ENCODE measurements at regions of chr1 and their contacts with region 1.

Region 1: GRCh38 chr1:205300886-205301821 is 20.4 kb downstream of the NUAK2 start:
- DNase-seq: no peak
- H3K4me3 ChIP-seq: no peak overlapping the region
- H3K4me3 Mint-ChIP-seq: no peak overlapping the region
- H3K27ac ChIP-seq: no peak overlapping the region
- H3K27ac Mint-ChIP-seq: peak overlapping the region in 3 of 7 donors; percentile 9 to 35 (median 34)
- H3K4me1 ChIP-seq: peaks cover 29% of the 10 kb centered on the region
- H3K4me1 Mint-ChIP-seq: peaks cover 31 to 61% (median 44%) of the 10 kb centered on the region in 4 donors
- H3K27me3 ChIP-seq: no peaks in the 10 kb centered on the region
- H3K27me3 Mint-ChIP-seq: no peaks in the 10 kb centered on the region

Region 2: GRCh38 chr1:205313563-205314308 is 12.6 kb after region 1 on chr1:
- CTCF ChIA-PET with region 1: interaction called, 26 read pairs
- POLR2A ChIA-PET with region 1: interaction called, 67 read pairs
- intact Hi-C with region 1: loop called (anchors 2 kb)
- DNase-seq: peak in 2 of 5 donors; percentile 18 to 54
- H3K4me3 ChIP-seq: peak overlapping the region; percentile 17 to 20
- H3K4me3 Mint-ChIP-seq: peak overlapping the region; percentile 82 to 93 (median 86)
- H3K27ac ChIP-seq: peak overlapping the region; percentile 2
- H3K27ac Mint-ChIP-seq: peak overlapping the region; percentile 81 to 95 (median 88)
- H3K4me1 ChIP-seq: peaks cover 86% of the 10 kb centered on the region
- H3K4me1 Mint-ChIP-seq: peaks cover 66 to 95% (median 78%) of the 10 kb centered on the region in 4 donors
- H3K27me3 ChIP-seq: no peaks in the 10 kb centered on the region
- H3K27me3 Mint-ChIP-seq: no peaks in the 10 kb centered on the region

Region 3: DNA sequence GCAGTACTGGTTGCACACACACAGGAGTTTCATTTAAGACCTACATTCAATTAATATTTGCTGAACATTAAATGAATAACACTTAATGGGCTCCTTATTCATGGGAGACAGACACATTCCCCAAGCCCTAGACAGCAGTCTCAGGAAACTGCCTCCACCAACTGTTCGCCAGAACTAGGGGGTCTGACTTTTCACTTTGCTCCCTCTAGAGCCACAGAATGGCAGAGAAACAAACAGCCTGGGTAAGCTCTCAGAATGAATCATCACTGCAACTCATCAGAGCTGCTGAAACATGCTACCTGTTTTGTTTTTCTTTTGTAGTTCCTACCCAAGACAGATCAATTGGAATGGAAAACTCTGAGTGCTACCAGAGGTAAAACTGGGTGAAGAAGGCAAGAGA is 298.9 kb after region 1 on chr1:
- CTCF ChIA-PET with region 1: no interaction called
- POLR2A ChIA-PET with region 1: no interaction called
- intact Hi-C with region 1: no loop called
- DNase-seq: no peak
- H3K4me3 ChIP-seq: no peak overlapping the region
- H3K4me3 Mint-ChIP-seq: no peak overlapping the region
- H3K27ac ChIP-seq: no peak overlapping the region
- H3K27ac Mint-ChIP-seq: peak overlapping the region in 3 of 7 donors; percentile 37 to 80 (median 59)
- H3K4me1 ChIP-seq: no peaks in the 10 kb centered on the region
- H3K4me1 Mint-ChIP-seq: peaks cover 10 to 15% (median 14%) of the 10 kb centered on the region in 4 donors
- H3K27me3 ChIP-seq: no peaks in the 10 kb centered on the region
- H3K27me3 Mint-ChIP-seq: no peaks in the 10 kb centered on the region